ENCODE measurements at regions of chr22 and their contacts with region 1.

Region 1: DNA sequence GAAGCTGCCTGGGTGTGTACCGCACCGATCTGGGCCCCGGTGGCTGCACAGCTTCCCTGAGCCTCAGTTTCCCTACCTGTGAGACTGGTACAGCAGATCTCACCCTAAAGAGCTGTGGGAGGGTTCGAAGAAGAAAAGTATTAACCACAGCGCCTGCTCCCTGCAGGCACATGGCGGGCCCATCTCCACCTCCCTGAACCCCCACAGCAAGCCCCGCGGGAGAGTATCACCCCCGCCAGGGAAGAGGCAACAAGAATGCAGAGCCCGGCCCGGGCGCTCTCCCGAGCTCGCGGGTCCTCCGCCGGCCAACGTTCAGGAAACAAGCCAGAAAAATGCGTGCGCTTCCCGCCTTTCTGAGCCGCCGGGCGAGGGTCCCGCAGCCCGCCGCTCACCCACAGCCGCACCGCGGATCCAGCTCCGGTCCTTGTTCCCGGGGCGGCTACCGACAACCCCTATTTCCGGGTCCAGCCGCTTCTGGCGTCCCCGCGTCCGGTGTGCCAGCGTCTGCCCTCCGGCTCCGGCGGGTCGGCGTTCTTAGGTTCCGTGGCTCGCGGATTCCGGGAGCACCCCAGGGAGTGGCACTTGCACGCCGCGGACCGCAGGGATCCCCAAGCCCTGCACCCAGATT is at the start of gene TOP3B:
- DNase-seq: peak; percentile 85
- ATAC-seq: peak; percentile 94
- H3K4me3 ChIP-seq: peak within 1 kb of the TSS; percentile 45 to 94 (median 89)
- H3K4me3 Mint-ChIP-seq: peak within 1 kb of the TSS; percentile 91
- H3K27ac ChIP-seq: peak within 1 kb of the TSS; percentile 55 to 87
- H3K27ac Mint-ChIP-seq: peak within 1 kb of the TSS; percentile 94
- H3K4me1 ChIP-seq: peaks cover 14 to 18% of the 10 kb centered on the region in 2 donors
- H3K4me1 Mint-ChIP-seq: peaks cover 40% of the 10 kb centered on the region
- H3K27me3 ChIP-seq: no peaks in the 10 kb centered on the region
- H3K27me3 Mint-ChIP-seq: no peaks in the 10 kb centered on the region
- CTCF ChIP-seq: no peak
- total RNA-seq, gene TOP3B: 103 and 105 TPM in 2 replicates

Region 2: GRCh38 chr22:21791635-21792625 is 190.5 kb before region 1 on chr22:
- CTCF ChIA-PET with region 1: no interaction called
- POLR2A ChIA-PET with region 1: no interaction called
- intact Hi-C with region 1: no loop called
- DNase-seq: no peak
- ATAC-seq: peak; percentile 28
- H3K4me3 ChIP-seq: no peak overlapping the region
- H3K4me3 Mint-ChIP-seq: no peak overlapping the region
- H3K27ac ChIP-seq: no peak overlapping the region
- H3K27ac Mint-ChIP-seq: peak overlapping the region; percentile 33
- H3K4me1 ChIP-seq: no peaks in the 10 kb centered on the region
- H3K4me1 Mint-ChIP-seq: peaks cover 4% of the 10 kb centered on the region
- H3K27me3 ChIP-seq: no peaks in the 10 kb centered on the region
- H3K27me3 Mint-ChIP-seq: no peaks in the 10 kb centered on the region
- CTCF ChIP-seq: no peak

Region 3: DNA sequence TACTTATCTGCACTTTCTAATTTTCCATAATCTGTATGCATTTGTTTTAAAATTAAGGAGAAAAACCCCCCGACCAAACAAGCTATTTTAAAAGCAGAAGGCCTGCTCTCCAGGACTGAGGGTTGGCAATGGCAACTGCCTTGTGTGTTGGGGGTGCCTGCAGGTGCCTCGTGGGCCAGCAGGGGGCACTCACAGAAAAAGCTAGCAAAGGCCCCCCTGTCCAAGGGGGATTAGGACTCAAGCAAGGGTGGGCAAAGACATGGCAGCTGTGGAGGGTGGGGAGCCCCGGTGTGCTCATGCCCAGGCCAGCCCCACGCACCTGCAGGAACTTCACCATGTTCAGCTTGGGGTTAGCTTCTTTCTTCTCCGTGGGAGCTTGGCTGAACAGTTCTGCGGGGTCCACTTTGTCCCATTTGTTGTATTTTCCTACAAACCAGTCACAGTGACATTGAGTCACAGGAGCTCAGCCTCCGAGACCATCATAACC is 10.1 kb before region 1 on chr22:
- CTCF ChIA-PET with region 1: interaction called, 25 read pairs
- POLR2A ChIA-PET with region 1: interaction called, 4 read pairs
- intact Hi-C with region 1: no loop called
- DNase-seq: peak; percentile 71
- ATAC-seq: peak; percentile 78
- H3K4me3 ChIP-seq: no peak overlapping the region
- H3K4me3 Mint-ChIP-seq: no peak overlapping the region
- H3K27ac ChIP-seq: no peak overlapping the region
- H3K27ac Mint-ChIP-seq: no peak overlapping the region
- H3K4me1 ChIP-seq: no peaks in the 10 kb centered on the region
- H3K4me1 Mint-ChIP-seq: peaks cover 6% of the 10 kb centered on the region
- H3K27me3 ChIP-seq: no peaks in the 10 kb centered on the region
- H3K27me3 Mint-ChIP-seq: no peaks in the 10 kb centered on the region
- CTCF ChIP-seq: peak; percentile 96